ENCODE measurements at regions of chr17 and their contacts with region 1.

Region 1: GRCh38 chr17:79810130-79811010 is 13.5 kb upstream of the CBX8 start:
- DNase-seq: peak; percentile 63
- ATAC-seq: peak; percentile 74
- H3K4me3 ChIP-seq: no peak overlapping the region
- H3K4me3 Mint-ChIP-seq: peak overlapping the region; percentile 33
- H3K27ac ChIP-seq: no peak overlapping the region
- H3K27ac Mint-ChIP-seq: peak overlapping the region; percentile 46
- H3K4me1 ChIP-seq: peaks cover 44 to 73% of the 10 kb centered on the region in 2 donors
- H3K4me1 Mint-ChIP-seq: peaks cover 29% of the 10 kb centered on the region
- H3K27me3 ChIP-seq: peaks cover 0 to 91% (median 75%) of the 10 kb centered on the region in 4 experiments
- H3K27me3 Mint-ChIP-seq: peaks cover 52% of the 10 kb centered on the region
- CTCF ChIP-seq: no peak

Region 2: DNA sequence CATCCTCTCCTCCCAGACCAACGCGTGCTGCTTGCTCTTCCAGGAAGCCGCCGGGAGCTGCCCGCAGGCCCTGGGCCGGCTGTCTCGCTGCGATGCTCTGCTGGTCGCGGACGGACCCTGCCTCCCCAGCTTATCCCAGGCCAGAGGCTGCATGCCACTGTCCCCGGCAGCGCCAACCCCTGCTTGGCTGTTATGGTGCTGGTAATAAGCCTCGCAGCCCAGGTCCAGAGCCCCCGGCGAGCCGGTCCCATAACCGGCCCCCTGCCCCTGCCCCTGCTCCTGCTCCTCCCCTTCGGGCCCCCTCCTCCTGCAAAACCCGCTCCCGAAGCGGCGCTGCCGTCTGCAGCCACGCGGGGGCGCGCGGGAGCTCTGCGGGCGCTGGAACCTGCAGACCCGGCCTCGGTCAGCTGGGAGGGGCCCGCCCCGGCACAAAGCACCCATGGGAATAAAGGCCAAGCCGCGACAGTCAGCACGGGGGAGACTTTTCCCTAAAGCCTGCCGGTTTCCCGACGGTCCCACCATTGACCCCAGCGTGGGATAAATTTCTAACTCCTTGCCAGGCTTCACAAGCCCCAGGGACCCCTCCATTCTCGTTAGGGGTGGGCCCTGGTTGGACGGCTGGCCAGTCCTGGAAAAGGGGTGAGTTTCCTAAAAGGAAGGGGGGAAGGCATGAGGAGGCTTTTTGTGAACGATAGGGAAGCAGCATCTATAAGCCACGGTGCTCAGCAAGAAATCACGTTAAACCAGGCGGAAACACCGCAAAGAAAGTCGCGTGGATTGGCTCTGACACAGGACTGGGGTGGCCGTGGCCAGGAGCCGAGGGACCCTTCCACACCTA is 68.4 kb before region 1 on chr17:
- CTCF ChIA-PET with region 1: no interaction called
- POLR2A ChIA-PET with region 1: no interaction called
- intact Hi-C with region 1: no loop called
- DNase-seq: peak; percentile 78
- ATAC-seq: peak; percentile 80
- H3K4me3 ChIP-seq: no peak overlapping the region
- H3K4me3 Mint-ChIP-seq: peak overlapping the region; percentile 29
- H3K27ac ChIP-seq: no peak overlapping the region
- H3K27ac Mint-ChIP-seq: no peak overlapping the region
- H3K4me1 ChIP-seq: peaks cover 16 to 24% of the 10 kb centered on the region in 2 donors
- H3K4me1 Mint-ChIP-seq: peaks cover 11% of the 10 kb centered on the region
- H3K27me3 ChIP-seq: peaks cover 0 to 29% (median 17%) of the 10 kb centered on the region in 4 experiments
- H3K27me3 Mint-ChIP-seq: peaks cover 27% of the 10 kb centered on the region
- CTCF ChIP-seq: peak; percentile 95

Region 3: DNA sequence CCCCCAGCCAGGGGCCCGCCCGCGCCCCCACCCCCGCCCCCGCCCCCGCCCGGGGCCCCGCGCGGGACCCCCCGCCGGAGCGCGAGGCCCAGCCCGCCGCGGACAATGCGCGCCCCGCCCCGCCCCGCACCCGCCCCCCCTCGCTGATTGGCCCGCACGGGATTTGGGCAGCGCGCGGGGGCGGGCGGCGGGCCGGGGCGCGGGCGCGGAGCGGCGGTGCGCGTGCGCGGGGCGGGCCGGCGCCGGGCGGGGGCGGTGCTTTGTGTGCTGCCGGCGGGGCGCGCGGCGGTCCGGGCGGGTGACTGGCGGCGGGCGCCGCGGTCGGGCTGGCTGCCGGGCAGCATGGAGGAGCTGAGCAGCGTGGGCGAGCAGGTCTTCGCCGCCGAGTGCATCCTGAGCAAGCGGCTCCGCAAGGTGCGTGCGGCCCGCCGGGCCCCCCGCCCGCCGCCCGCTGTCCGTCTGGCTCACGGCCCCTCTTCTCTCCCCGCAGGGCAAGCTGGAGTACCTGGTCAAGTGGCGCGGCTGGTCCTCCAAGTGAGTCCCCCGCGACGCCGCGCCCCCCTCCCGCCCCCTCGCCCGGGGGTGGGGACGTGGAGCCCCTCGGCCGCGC is 32.4 kb before region 1 on chr17 and contains the start of gene CBX2:
- CTCF ChIA-PET with region 1: no interaction called
- POLR2A ChIA-PET with region 1: no interaction called
- intact Hi-C with region 1: loop called (anchors 2 kb)
- DNase-seq: peak; percentile 87
- ATAC-seq: peak; percentile 90
- H3K4me3 ChIP-seq: peak within 1 kb of the TSS; percentile 7 to 66 (median 51)
- H3K4me3 Mint-ChIP-seq: peak within 1 kb of the TSS; percentile 88
- H3K27ac ChIP-seq: no peak within 1 kb of the TSS
- H3K27ac Mint-ChIP-seq: peak within 1 kb of the TSS; percentile 69
- H3K4me1 ChIP-seq: peaks cover 27 to 40% of the 10 kb centered on the region in 2 donors
- H3K4me1 Mint-ChIP-seq: peaks cover 24% of the 10 kb centered on the region
- H3K27me3 ChIP-seq: peaks cover 0 to 84% (median 50%) of the 10 kb centered on the region in 4 experiments
- H3K27me3 Mint-ChIP-seq: peaks cover 74% of the 10 kb centered on the region
- CTCF ChIP-seq: no peak
- total RNA-seq, gene CBX2: 0.07 and 0.47 TPM in 2 replicates

Region 4: GRCh38 chr17:79844869-79845600 is 34.7 kb after region 1 on chr17:
- CTCF ChIA-PET with region 1: interaction called, 21 read pairs
- POLR2A ChIA-PET with region 1: interaction called, 7 read pairs
- intact Hi-C with region 1: loop called (anchors 1 kb)
- DNase-seq: peak; percentile 75
- ATAC-seq: peak; percentile 74
- H3K4me3 ChIP-seq: peak overlapping the region in 1 of 5 experiments; percentile 8
- H3K4me3 Mint-ChIP-seq: peak overlapping the region; percentile 52
- H3K27ac ChIP-seq: no peak overlapping the region
- H3K27ac Mint-ChIP-seq: no peak overlapping the region
- H3K4me1 ChIP-seq: peaks cover 53 to 56% of the 10 kb centered on the region in 2 donors
- H3K4me1 Mint-ChIP-seq: peaks cover 35% of the 10 kb centered on the region
- H3K27me3 ChIP-seq: peaks cover 0 to 83% (median 43%) of the 10 kb centered on the region in 4 experiments
- H3K27me3 Mint-ChIP-seq: peaks cover 37% of the 10 kb centered on the region
- CTCF ChIP-seq: peak; percentile 90